ENCODE measurements at regions of chr10 and their contacts with region 1.

Region 1: GRCh38 chr10:89217057-89217990 is 10.2 kb upstream of the CH25H start:
- DNase-seq: peak; percentile 48
- H3K4me3 ChIP-seq: no peak overlapping the region
- CTCF ChIP-seq: peak; percentile 57

Region 2: GRCh38 chr10:89029785-89030437 is 187.4 kb before region 1 on chr10:
- in situ Hi-C with region 1: loop called (anchors 10 kb)
- DNase-seq: peak; percentile 78
- H3K4me3 ChIP-seq: no peak overlapping the region
- CTCF ChIP-seq: peak; percentile 81

Region 3: DNA sequence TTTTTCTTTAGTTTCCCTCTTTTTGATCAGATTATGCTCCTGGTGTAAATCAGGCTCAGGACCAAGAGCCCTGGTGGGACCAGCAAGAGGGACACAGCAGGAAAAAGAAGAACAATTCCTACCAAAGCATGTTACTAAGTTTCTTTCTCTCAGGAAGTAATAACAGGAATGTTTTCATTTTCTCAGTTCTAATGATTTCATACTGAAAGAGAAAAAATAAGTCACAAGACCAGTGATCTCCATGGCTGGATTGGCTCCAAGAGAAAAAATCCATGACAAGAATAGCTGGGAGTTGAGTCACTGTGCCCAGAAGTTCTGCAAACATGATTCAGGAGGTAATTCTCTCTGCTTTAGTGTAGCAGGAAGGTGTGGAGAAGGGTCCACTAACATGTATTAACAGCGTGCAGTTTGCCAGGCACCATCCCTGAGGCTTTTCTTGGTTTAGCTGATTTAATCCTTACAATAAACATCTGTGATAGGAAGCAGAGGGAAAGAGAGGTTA is 60.8 kb after region 1 on chr10:
- in situ Hi-C with region 1: no loop called
- DNase-seq: peak; percentile 98
- H3K4me3 ChIP-seq: no peak overlapping the region
- CTCF ChIP-seq: no peak